Activated B cell treated with CpG ODN at 0.5 μM for 24 hours (primary cell): ENCODE measurements at regions of chr17 and their contacts with region 1.

Region 1: DNA sequence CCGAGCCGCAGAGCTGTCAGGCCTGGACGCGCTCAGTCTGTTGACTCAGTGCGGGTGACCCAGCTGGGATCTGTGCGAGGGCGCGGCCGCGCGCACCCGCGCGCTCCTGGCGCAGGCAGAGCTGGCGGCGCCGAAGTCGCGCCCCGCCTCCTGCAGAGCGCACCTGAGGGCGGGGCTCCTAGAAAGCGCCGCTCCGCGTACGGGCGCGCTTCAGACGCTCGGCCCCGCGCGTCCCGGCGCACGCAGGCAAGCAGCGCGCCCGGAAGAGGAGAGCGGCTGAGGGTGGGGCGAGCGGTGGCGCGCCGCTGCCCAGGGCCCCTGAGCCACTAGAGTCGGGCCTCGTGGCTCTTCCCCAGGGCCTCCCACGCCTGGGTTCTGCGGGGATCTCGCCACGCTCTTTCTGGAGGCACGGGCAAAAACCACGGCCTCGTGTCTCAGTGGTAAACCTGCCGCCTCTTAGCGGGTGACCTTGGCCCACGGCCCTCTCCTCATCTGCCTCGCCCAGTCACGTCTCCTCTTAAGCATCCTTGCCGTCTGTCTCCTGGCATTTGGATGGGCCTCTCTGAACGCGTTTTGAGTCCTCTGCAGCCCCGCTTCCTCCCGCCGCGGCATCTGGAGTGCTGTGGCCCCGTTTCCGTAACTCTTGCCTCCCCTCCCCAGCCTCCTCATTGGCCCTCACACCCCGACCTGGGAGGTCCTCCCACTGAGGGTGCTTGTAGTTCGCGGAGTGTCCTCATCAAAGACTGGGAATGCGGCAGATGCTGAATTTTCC is at the start of gene ABCA5:
- DNase-seq: peak; percentile 88
- ATAC-seq: peak; percentile 91
- H3K4me3 Mint-ChIP-seq: peak within 1 kb of the TSS; percentile 98
- H3K27ac Mint-ChIP-seq: peak within 1 kb of the TSS; percentile 97
- H3K4me1 Mint-ChIP-seq: peaks cover 27% of the 10 kb centered on the region
- H3K27me3 Mint-ChIP-seq: peaks cover 9% of the 10 kb centered on the region
- CTCF ChIP-seq: no peak
- total RNA-seq, gene ABCA5: 24.2 and 30.3 TPM in 2 replicates

Region 2: GRCh38 chr17:67359960-67360773 is 1967.1 kb before region 1 on chr17:
- CTCF ChIA-PET with region 1: no interaction called
- POLR2A ChIA-PET with region 1: no interaction called
- intact Hi-C with region 1: loop called (anchors 2 kb)
- DNase-seq: no peak
- ATAC-seq: peak; percentile 45
- H3K4me3 Mint-ChIP-seq: no peak overlapping the region
- H3K27ac Mint-ChIP-seq: no peak overlapping the region
- H3K4me1 Mint-ChIP-seq: peaks cover 48% of the 10 kb centered on the region
- H3K27me3 Mint-ChIP-seq: no peaks in the 10 kb centered on the region
- CTCF ChIP-seq: no peak

Region 3: DNA sequence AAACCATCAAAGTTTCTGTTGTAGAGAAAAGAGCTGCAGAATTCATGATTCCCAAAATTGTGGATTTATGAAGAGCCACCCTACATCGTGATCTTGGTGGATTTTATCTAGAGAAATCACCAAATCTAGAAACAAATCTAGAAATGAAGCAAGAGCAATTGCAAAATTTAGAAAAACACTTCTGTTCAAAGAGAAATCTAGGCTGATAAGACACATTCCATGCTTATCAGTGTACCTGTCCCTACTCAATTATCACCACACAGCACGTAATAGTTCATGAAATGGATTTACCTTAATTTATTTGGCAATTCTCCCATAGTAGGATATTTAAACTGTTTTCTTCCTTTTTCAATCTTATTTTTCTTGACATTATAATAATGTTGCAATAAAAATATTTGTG is 1703.5 kb before region 1 on chr17:
- CTCF ChIA-PET with region 1: no interaction called
- POLR2A ChIA-PET with region 1: interaction called, 10 read pairs
- intact Hi-C with region 1: no loop called
- DNase-seq: no peak
- ATAC-seq: no peak
- H3K4me3 Mint-ChIP-seq: no peak overlapping the region
- H3K27ac Mint-ChIP-seq: no peak overlapping the region
- H3K4me1 Mint-ChIP-seq: peaks cover 2% of the 10 kb centered on the region
- H3K27me3 Mint-ChIP-seq: no peaks in the 10 kb centered on the region
- CTCF ChIP-seq: no peak

Region 4: GRCh38 chr17:68035523-68036303 is 1291.5 kb before region 1 on chr17 and contains the start of gene KPNA2:
- CTCF ChIA-PET with region 1: no interaction called
- POLR2A ChIA-PET with region 1: no interaction called
- intact Hi-C with region 1: loop called (anchors 1 kb)
- DNase-seq: peak; percentile 80
- ATAC-seq: peak; percentile 89
- H3K4me3 Mint-ChIP-seq: peak within 1 kb of the TSS; percentile 93
- H3K27ac Mint-ChIP-seq: peak within 1 kb of the TSS; percentile 92
- H3K4me1 Mint-ChIP-seq: peaks cover 11% of the 10 kb centered on the region
- H3K27me3 Mint-ChIP-seq: no peaks in the 10 kb centered on the region
- CTCF ChIP-seq: no peak
- total RNA-seq, gene KPNA2: 49.5 and 49.9 TPM in 2 replicates

Region 5: DNA sequence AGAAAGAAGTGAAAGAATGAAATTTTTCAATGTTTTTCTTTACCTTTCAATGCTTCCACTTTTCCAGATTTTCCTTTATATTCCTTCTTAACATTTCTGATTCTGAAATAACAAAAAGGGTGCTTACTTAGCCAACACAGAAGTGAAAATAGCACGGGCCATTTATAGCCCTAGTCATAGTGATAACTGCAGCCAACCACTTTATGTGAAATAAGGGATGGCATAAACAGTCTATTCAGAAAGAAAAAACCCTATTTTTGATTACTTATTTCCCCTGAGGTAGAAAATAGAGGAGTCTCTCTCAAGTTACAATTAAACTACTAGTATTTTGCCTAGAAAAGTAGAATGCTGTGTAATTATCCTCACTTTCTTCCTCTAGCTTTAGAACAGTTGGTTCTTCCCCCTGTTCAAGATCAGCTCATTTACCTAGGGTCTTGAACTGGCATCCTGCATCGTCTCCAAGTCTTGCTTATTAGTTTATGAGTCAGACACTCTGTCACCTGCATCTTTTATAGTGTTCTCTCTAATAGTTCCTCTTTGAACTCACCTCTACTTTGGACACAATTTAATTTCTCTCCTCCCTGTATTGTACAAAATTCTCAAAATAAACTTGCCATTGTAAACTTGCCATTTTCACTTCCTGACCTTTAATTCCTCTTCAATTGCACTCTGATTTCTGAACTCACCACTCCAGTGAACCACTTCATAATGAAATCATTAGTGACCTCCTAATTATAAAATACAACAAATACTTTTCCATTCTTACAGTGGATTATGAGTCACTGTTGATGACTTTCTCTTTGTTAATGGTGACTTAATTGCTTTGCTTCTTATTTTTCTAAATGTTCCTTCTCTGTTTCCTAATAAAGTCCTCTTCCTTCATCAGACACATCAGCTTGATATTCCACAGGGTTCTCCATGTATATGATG is 209.1 kb before region 1 on chr17:
- CTCF ChIA-PET with region 1: no interaction called
- POLR2A ChIA-PET with region 1: no interaction called
- intact Hi-C with region 1: loop called (anchors 2 kb)
- DNase-seq: no peak
- ATAC-seq: peak; percentile 41
- H3K4me3 Mint-ChIP-seq: peak overlapping the region; percentile 42
- H3K27ac Mint-ChIP-seq: peak overlapping the region; percentile 79
- H3K4me1 Mint-ChIP-seq: peaks cover 49% of the 10 kb centered on the region
- H3K27me3 Mint-ChIP-seq: no peaks in the 10 kb centered on the region
- CTCF ChIP-seq: no peak

Region 6: GRCh38 chr17:69506489-69506888 is 179.2 kb after region 1 on chr17:
- CTCF ChIA-PET with region 1: no interaction called
- POLR2A ChIA-PET with region 1: interaction called, 13 read pairs
- intact Hi-C with region 1: loop called (anchors 1 kb)
- DNase-seq: no peak
- ATAC-seq: no peak
- H3K4me3 Mint-ChIP-seq: no peak overlapping the region
- H3K27ac Mint-ChIP-seq: no peak overlapping the region
- H3K4me1 Mint-ChIP-seq: peaks cover 44% of the 10 kb centered on the region
- H3K27me3 Mint-ChIP-seq: no peaks in the 10 kb centered on the region
- CTCF ChIP-seq: no peak

Region 7: GRCh38 chr17:69523244-69523861 is 196.1 kb after region 1 on chr17:
- CTCF ChIA-PET with region 1: no interaction called
- POLR2A ChIA-PET with region 1: no interaction called
- intact Hi-C with region 1: loop called (anchors 2 kb)
- DNase-seq: no peak
- ATAC-seq: peak; percentile 45
- H3K4me3 Mint-ChIP-seq: no peak overlapping the region
- H3K27ac Mint-ChIP-seq: no peak overlapping the region
- H3K4me1 Mint-ChIP-seq: peaks cover 8% of the 10 kb centered on the region
- H3K27me3 Mint-ChIP-seq: peaks cover 17% of the 10 kb centered on the region
- CTCF ChIP-seq: no peak